Posterior vena cava (tissue), 2 donors: ENCODE measurements at regions of chr7 and their contacts with region 1.

Region 1: GRCh38 chr7:2567679-2568278 is 9.0 kb downstream of the IQCE start:
- DNase-seq: peak; percentile 81

Region 2: GRCh38 chr7:2529161-2530070 is 38.4 kb before region 1 on chr7:
- intact Hi-C with region 1: no loop called
- DNase-seq: peak; percentile 93

Region 3: GRCh38 chr7:2680792-2681490 is 113.2 kb after region 1 on chr7:
- intact Hi-C with region 1: loop called in 1 of 2 experiments (anchors 5 kb)
- DNase-seq: peak; percentile 94

Region 4: DNA sequence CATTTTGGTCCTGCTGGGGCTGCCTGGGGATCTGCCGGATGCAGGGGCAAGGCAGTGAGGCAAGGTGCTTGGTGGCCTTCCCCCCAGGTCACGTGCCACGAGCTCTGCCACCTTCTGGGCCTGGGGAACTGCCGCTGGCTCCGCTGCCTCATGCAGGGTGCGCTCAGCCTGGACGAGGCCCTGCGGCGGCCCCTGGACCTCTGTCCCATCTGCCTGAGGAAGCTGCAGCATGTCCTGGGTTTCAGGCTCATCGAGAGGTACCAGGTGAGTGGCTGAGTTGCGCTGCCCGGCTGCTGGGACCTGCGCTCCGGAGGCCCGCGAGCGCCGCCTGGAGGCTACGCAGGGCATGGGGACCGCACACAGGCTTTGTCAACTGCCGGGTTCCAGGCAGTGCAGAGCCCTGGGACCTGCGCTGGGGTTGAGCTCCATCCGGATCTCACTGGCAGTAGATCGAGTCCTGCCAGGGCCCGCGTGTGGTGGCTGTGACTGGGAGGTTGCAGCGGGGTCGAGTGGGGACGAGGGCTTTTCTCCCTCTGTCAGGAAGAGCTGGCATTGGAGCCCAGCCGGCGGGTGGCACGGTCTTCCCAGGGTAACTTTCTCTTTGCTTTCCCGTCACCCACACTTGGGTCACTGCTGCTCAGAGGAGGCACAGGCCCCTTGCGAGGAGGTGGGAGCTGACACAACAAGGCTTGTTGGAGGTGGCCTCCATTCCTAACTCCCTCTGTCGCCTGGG is 141.9 kb after region 1 on chr7:
- intact Hi-C with region 1: loop called in 1 of 2 experiments (anchors 10 kb)
- DNase-seq: peak; percentile 89